Calu3 (cell line): ENCODE measurements at regions of chr7 and their contacts with region 1.

Region 1: DNA sequence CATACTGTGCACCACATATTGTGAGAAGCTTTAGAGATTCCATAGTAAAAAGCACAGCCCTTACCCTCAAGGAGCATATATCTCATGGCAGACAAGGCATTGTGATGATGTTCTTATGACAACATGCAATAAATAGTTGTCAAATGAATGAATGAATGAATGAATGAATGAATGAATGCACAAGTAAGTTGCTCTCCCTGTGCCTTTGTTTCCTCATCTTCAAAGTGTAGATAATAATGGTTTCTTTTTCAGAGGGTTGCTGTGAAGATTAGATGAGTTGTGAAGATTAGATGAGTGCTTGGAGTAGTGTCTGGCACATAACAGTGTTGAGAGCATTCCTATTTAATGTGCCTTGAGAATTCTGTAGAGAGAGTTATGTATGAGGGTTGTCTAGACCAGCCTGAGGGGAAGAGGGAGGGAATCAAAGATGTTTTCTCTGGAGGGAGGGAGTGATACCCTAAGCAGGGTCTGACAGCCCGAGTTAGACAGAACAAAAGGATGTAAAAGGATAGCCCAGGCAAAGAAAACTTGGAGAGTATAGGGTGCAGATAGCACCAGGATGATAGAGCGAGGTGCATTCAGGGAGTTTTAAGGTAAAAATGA is 217.2 kb downstream of the RELN start:
- DNase-seq: no peak
- H3K4me3 Mint-ChIP-seq: no peak overlapping the region
- H3K27ac Mint-ChIP-seq: no peak overlapping the region
- H3K4me1 Mint-ChIP-seq: no peaks in the 10 kb centered on the region
- H3K27me3 Mint-ChIP-seq: peaks cover 23% of the 10 kb centered on the region
- CTCF ChIP-seq: no peak

Region 2: GRCh38 chr7:102376964-102377466 is 1395.3 kb before region 1 on chr7:
- CTCF ChIA-PET with region 1: no interaction called
- intact Hi-C with region 1: no loop called
- DNase-seq: no peak
- H3K4me3 Mint-ChIP-seq: no peak overlapping the region
- H3K27ac Mint-ChIP-seq: no peak overlapping the region
- H3K4me1 Mint-ChIP-seq: no peaks in the 10 kb centered on the region
- H3K27me3 Mint-ChIP-seq: no peaks in the 10 kb centered on the region
- CTCF ChIP-seq: no peak

Region 3: DNA sequence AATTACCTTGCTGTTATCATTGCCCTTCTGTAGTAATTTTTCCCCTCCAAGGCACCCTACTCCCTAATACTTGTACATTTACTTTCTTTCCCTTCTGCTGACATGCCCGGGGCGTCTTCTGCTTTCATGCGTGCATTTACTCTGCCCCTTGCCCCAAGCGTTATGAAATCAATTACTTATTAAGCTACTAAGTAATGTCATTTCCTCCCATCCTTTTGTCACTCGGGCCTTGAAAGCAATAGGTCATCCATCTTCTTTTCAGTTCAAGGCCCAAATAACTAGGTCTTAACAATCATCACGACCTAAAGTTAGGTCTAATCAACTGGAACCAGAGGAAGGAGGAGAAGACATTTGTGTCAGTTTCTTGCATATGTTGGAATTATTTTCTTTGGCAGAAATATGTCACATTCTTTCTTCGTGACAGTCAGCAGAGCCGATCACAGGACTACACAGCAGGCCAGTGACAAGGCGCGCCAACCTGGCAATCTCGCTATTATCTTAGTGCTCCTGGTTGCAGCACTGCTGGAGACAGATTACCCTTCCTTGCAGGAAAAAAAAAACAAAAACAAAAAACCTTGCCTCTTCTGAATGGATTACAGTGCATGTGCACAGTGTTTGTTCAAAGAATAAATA is 38.0 kb after region 1 on chr7:
- CTCF ChIA-PET with region 1: no interaction called
- intact Hi-C with region 1: loop called (anchors 1 kb)
- DNase-seq: peak; percentile 12
- H3K4me3 Mint-ChIP-seq: peak overlapping the region; percentile 42
- H3K27ac Mint-ChIP-seq: peak overlapping the region; percentile 90
- H3K4me1 Mint-ChIP-seq: peaks cover 37% of the 10 kb centered on the region
- H3K27me3 Mint-ChIP-seq: no peaks in the 10 kb centered on the region
- CTCF ChIP-seq: no peak

Region 4: GRCh38 chr7:103833401-103833800 is 61.1 kb after region 1 on chr7:
- CTCF ChIA-PET with region 1: no interaction called
- intact Hi-C with region 1: no loop called
- DNase-seq: no peak
- H3K4me3 Mint-ChIP-seq: no peak overlapping the region
- H3K27ac Mint-ChIP-seq: no peak overlapping the region
- H3K4me1 Mint-ChIP-seq: no peaks in the 10 kb centered on the region
- H3K27me3 Mint-ChIP-seq: no peaks in the 10 kb centered on the region
- CTCF ChIP-seq: no peak